ENCODE measurements at regions of chr5 and their contacts with region 1.

Region 1: DNA sequence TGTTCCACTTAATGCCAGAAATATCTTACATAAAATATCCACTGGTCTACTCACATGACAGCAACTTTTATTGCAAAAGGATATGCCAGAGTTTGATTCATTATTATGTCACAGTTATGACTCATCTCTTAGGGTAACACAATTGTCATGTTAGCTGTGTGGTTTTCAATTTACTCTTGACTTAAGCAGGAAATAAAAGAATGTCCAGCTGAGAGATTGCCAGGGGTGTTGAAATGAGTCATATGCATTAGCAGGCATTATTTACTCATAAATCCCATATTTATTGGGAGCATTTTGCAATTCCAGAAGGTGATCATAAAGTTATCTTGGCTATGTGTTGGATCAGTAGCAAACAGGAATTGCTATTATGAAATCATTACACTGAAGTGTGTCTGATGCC is 1164.6 kb upstream of the CDH18 start:
- DNase-seq: peak; percentile 97
- H3K4me3 ChIP-seq: no peak overlapping the region
- H3K27ac ChIP-seq: peak overlapping the region; percentile 80
- H3K4me1 ChIP-seq: peaks cover 16% of the 10 kb centered on the region
- H3K27me3 ChIP-seq: no peaks in the 10 kb centered on the region
- CTCF ChIP-seq: no peak
- POLR2A ChIP-seq: no peak

Region 2: DNA sequence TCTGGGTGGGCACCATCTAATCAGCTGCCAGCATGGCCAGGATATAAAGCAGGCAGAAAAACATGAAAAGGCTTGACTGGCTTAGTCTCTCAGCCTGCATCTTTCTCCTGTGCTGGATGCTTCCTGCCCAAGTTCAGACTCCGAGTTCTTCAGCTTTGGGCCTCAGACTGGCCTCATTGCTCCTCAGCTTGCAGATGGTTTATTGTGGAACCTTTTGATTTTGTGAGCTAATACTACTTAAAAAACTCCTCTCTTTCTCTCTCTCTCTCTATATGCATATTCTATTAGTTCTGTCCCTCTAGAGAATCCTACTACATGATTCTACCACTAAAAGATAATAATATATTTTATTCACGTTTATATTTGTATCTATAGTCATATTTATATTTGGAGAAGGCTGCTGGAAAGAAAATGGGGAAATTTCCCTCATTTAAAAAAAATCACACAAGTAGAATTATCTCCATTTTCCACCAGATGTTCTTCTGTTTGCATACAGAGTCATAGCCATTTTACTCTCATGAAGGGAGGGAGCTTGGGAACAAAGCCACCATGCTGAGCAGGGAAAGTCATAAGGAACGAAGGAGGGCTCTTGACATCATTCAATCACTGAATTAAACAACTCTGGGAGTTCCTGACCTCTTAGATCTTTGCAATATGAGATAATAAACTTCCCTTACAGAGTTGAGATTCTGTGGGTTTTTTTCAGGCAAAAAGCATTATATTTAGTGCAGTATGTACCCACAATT is 27.2 kb before region 1 on chr5:
- CTCF ChIA-PET with region 1: no interaction called
- POLR2A ChIA-PET with region 1: no interaction called
- dilution Hi-C with region 1: no loop called
- intact Hi-C with region 1: no loop called
- DNase-seq: no peak
- H3K4me3 ChIP-seq: no peak overlapping the region
- H3K27ac ChIP-seq: no peak overlapping the region
- H3K4me1 ChIP-seq: no peaks in the 10 kb centered on the region
- H3K27me3 ChIP-seq: no peaks in the 10 kb centered on the region
- CTCF ChIP-seq: no peak
- POLR2A ChIP-seq: no peak

Region 3: GRCh38 chr5:21236971-21237427 is 84.4 kb after region 1 on chr5:
- CTCF ChIA-PET with region 1: no interaction called
- POLR2A ChIA-PET with region 1: no interaction called
- dilution Hi-C with region 1: no loop called
- intact Hi-C with region 1: loop called (anchors 2 kb)
- DNase-seq: peak; percentile 62
- H3K4me3 ChIP-seq: peak overlapping the region in 1 of 3 experiments; percentile 6
- H3K27ac ChIP-seq: peak overlapping the region; percentile 48
- H3K4me1 ChIP-seq: peaks cover 12% of the 10 kb centered on the region
- H3K27me3 ChIP-seq: no peaks in the 10 kb centered on the region
- CTCF ChIP-seq: no peak
- POLR2A ChIP-seq: no peak

Measured in endothelial cell of umbilical vein (primary cell).